Sciatic nerve (tissue), 2 donors: ENCODE measurements at regions of chr17 and their contacts with region 1.

Region 1: DNA sequence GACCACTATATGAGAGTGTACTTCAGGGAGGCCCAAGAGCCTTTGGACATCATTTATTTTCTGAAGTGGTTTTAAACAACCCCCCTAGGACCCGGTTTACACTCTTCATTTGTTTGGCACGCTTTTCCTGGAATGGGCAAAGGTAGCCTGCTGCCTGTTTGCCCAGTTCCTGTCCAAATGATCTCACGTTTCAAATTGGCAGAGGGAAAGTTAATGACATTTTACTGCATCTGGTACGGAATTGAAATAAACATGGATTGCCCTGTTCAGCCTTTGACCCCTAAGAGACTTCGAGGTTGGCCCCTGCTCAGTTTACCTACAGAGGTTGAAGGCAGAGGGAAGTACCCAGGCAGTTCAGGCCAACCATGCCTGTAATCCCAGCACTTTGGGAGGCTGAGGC is 5.8 kb upstream of the RPRML start:
- DNase-seq: no peak
- ATAC-seq: no peak

Region 2: DNA sequence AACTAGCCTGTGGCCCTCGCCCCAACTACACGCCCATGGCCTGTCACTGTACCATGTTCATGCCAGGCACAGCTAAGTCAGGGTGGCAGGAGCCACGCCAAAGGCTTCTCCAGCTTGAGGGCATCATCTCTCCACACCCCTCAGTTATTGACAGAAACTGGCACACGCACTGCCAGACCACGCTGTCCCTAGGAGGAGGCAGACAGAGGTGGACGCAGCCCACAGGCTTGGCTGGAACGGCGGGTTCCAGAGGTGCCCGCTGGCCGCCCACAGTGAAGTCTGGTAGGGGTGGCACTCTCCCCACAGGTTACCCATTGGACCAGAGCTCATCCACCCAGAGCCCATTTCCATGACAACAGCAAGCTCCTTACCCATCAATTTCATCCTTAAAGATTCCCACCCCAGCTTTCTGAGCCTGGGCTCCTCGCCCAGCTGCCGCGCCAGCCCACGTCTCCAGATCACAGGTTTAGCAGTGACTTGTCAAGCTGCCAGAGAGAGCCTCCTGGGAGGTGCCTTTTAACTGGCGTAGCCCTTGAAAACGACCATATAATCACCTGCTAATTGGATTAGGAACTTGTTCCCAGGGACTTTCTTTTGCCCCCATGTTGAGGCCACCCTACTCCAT is 33.8 kb before region 1 on chr17:
- intact Hi-C with region 1: loop called (anchors 1 kb)
- DNase-seq: no peak
- ATAC-seq: no peak